Stomach (tissue), 19 donors: ENCODE measurements at regions of chr14 and their contacts with region 1.

Region 1: GRCh38 chr14:93788543-93789227 is 400 bp upstream of the PRIMA1 start:
- DNase-seq: peak; percentile 58 to 88
- H3K4me3 ChIP-seq: peak overlapping the region; percentile 58 to 70 (median 68)
- H3K27ac ChIP-seq: peak overlapping the region; percentile 73 to 93 (median 82)
- H3K4me1 ChIP-seq: peaks cover 6 to 55% (median 34%) of the 10 kb centered on the region in 4 donors
- H3K27me3 ChIP-seq: peaks cover 0 to 74% (median 11%) of the 10 kb centered on the region in 3 donors
- CTCF ChIP-seq: peak in 4 of 7 experiments; percentile 27 to 47 (median 34)
- EP300 ChIP-seq: no peak
- POLR2A ChIP-seq: no peak

Region 2: GRCh38 chr14:93606091-93606490 is 182.6 kb before region 1 on chr14:
- intact Hi-C with region 1: no loop called
- DNase-seq: no peak
- H3K4me3 ChIP-seq: no peak overlapping the region
- H3K27ac ChIP-seq: no peak overlapping the region
- H3K4me1 ChIP-seq: no peaks in the 10 kb centered on the region
- H3K27me3 ChIP-seq: no peaks in the 10 kb centered on the region
- CTCF ChIP-seq: no peak
- EP300 ChIP-seq: no peak
- POLR2A ChIP-seq: no peak

Region 3: GRCh38 chr14:93663317-93663716 is 125.4 kb before region 1 on chr14:
- intact Hi-C with region 1: loop called (anchors 10 kb)
- DNase-seq: peak in 1 of 2 donors; percentile 6
- H3K4me3 ChIP-seq: no peak overlapping the region
- H3K27ac ChIP-seq: no peak overlapping the region
- H3K4me1 ChIP-seq: no peaks in the 10 kb centered on the region
- H3K27me3 ChIP-seq: no peaks in the 10 kb centered on the region
- CTCF ChIP-seq: no peak
- EP300 ChIP-seq: no peak
- POLR2A ChIP-seq: no peak

Region 4: GRCh38 chr14:93729993-93730392 is 58.7 kb before region 1 on chr14:
- intact Hi-C with region 1: no loop called
- DNase-seq: no peak
- H3K4me3 ChIP-seq: no peak overlapping the region
- H3K27ac ChIP-seq: no peak overlapping the region
- H3K4me1 ChIP-seq: peaks cover 0 to 9% (median 5%) of the 10 kb centered on the region in 4 donors
- H3K27me3 ChIP-seq: no peaks in the 10 kb centered on the region
- CTCF ChIP-seq: no peak
- EP300 ChIP-seq: no peak
- POLR2A ChIP-seq: no peak

Region 5: DNA sequence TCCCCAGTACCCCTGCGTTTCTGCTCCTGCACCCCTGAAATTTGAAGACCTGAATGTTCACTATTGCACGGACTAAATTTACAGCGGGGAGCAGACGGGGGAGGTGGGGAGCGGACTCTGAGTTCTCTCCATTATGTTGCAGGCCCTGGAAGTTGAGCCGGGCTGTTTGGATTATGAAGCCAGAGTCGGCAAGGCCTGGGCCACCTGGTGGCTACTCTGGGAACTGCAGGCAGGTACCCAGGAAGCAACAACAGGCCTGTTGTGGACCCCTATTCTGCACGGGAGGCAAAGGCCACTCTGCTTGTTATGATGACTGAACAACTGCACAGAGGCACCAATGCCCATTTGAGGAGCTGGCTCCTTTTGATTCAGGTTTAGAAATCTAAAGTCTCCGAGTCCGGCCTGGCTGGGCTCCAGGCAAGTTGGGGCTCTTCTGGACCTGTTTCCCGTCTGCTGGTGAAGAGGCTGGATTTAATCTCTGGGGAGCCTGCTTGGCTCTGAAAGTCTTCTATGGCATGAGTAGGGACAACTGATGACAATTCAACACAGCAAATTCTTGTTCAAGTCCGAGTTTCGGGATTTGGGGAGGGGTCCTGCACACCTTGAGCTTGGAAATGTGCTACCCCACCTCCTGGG is 104.4 kb after region 1 on chr14:
- intact Hi-C with region 1: loop called (anchors 10 kb)
- DNase-seq: peak; percentile 82 to 88
- H3K4me3 ChIP-seq: no peak overlapping the region
- H3K27ac ChIP-seq: peak overlapping the region in 2 of 5 donors; percentile 41 to 79
- H3K4me1 ChIP-seq: peaks cover 0 to 26% (median 10%) of the 10 kb centered on the region in 4 donors
- H3K27me3 ChIP-seq: peaks cover 0 to 26% (median 0%) of the 10 kb centered on the region in 3 donors
- CTCF ChIP-seq: peak in 6 of 7 experiments; percentile 85 to 100 (median 98)
- EP300 ChIP-seq: no peak
- POLR2A ChIP-seq: no peak